ENCODE measurements at regions of chr12 and their contacts with region 1.

Region 1: DNA sequence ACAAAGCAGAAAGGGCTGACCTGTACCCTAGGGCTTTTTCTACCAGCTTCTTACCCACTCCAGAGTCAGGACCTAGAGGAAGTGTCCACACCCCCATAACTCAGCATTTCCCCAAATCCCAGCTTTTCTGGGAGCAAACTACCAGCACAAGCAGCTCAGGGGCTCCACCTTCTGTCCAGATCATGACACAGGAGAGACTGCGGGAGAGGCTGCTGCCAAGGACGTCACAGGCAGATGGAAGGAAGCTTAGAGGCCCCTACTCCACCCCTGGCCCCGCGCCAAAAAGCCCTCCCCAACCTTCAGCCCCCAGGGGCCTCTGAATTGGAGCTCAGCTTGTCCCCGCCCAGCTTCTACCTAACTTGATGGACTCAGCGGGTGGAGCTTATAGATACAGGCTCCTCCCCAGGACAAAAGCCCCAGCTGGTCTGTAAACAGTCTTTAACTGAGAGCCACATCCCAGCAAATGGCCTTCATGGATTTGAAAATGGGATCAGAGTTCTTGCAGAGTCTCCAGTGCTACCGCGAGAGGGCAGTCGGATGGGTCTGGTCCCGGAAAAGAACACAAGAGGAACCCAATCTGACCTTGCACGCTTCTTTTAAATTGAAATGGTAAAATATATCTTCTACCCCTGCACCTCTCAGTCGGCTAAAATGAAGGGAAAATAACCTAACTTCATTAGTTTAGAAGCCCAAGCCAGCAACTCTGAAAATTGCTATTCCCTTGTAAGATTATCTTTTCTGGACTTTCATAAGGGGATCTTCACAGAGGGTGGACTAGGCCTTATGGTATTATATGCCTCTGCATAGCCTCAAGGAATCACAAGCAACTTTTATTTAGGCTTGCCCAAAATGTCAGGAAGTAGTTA is 6.8 kb upstream of the BAZ2A start:
- DNase-seq: peak; percentile 92
- H3K4me3 ChIP-seq: peak overlapping the region; percentile 90 to 95
- H3K27ac ChIP-seq: peak overlapping the region; percentile 94 to 96
- H3K4me1 ChIP-seq: peaks cover 25 to 44% of the 10 kb centered on the region in 2 experiments
- H3K27me3 ChIP-seq: no peaks in the 10 kb centered on the region
- CTCF ChIP-seq: peak; percentile 75
- EP300 ChIP-seq: 0 out of 4 replicates have a peak, but pooled peaks have one; percentile 19 to 20
- RAD21 ChIP-seq: peak; percentile 80

Region 2: DNA sequence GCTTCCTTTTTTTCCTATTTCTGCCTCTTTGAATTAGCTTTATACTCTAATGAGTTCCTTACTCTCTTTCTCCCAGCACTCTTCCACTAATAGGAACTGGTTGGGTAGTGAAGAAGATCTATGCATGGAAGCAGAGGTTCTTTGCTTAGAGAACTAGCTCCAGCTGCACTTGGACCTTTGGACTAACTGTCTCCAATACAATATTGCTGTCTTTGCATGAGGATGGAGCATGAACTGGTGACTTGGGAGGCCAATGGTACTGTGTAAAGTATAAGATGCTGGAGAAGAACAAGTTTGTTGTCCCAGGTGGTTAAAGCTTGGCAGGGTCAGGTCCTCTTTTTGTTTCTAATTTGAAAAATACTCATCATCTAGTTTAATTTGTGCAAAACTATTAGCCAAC is 146.5 kb before region 1 on chr12:
- CTCF ChIA-PET with region 1: interaction called, 10 read pairs
- POLR2A ChIA-PET with region 1: no interaction called
- DNase-seq: no peak
- H3K4me3 ChIP-seq: no peak overlapping the region
- H3K27ac ChIP-seq: no peak overlapping the region
- H3K4me1 ChIP-seq: peaks cover 0 to 10% of the 10 kb centered on the region in 2 experiments; a peak in 1 of 4 replicates
- H3K27me3 ChIP-seq: peaks cover 16% of the 10 kb centered on the region; the same call in 1 of the 2 replicates
- CTCF ChIP-seq: no peak
- EP300 ChIP-seq: no peak
- RAD21 ChIP-seq: no peak

Region 3: DNA sequence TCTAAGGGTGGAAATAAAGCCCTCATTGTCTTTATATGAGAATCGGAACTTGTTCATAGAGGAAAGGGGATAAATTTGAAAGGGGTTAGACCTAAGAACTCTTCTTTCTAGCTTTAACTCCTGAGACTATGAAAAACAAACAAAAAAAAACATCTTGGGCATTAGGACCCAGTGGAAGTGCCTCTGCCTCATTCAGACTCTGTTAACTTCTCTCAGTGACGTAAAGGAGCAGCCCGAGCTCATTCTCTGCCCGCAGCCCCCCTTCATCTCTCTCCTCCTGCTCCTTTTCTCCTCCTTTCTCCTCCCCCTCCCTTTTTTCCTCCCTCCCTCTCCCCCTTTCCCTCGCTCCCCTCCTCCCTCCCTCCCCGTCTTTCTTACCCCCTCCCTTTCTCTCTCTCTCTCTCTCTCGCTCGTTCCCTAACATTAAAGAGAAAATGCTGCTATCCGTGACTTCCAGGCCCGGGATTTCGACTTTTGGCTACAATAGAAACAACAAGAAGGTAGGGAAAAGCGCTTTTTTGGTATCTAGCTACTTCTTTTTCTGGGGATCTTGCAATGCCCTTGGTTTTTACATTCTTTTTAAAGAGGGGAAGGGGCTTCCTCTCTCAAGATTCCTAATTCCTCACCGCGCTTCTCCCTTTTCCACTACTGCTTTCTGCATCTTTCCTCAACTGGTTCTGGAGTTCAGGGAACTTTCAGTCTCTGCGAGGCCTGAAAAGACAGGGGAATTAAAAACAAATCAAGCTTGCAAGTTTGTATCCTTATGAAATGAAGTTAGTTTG is 115.1 kb before region 1 on chr12 and contains the start of gene RBMS2:
- CTCF ChIA-PET with region 1: interaction called, 18 read pairs
- POLR2A ChIA-PET with region 1: interaction called, 5 read pairs
- DNase-seq: peak; percentile 75
- H3K4me3 ChIP-seq: peak within 1 kb of the TSS; percentile 62 to 73
- H3K27ac ChIP-seq: peak within 1 kb of the TSS; percentile 83 to 93
- H3K4me1 ChIP-seq: peaks cover 0 to under 1% of the 10 kb centered on the region in 2 experiments; a peak in 1 of 4 replicates
- H3K27me3 ChIP-seq: no peaks in the 10 kb centered on the region
- CTCF ChIP-seq: no peak
- EP300 ChIP-seq: no peak
- RAD21 ChIP-seq: no peak
- polyA plus RNA-seq, gene RBMS2: 8.9 and 12.2 TPM in 2 replicates

Region 4: GRCh38 chr12:56601503-56601902 is 35.4 kb before region 1 on chr12:
- CTCF ChIA-PET with region 1: interaction called, 40 read pairs
- POLR2A ChIA-PET with region 1: interaction called, 3 read pairs
- DNase-seq: peak; percentile 43
- H3K4me3 ChIP-seq: no peak overlapping the region
- H3K27ac ChIP-seq: no peak overlapping the region
- H3K4me1 ChIP-seq: no peaks in the 10 kb centered on the region
- H3K27me3 ChIP-seq: no peaks in the 10 kb centered on the region
- CTCF ChIP-seq: peak; percentile 32
- EP300 ChIP-seq: no peak
- RAD21 ChIP-seq: peak; percentile 32; the same call in 1 of the 2 replicates

Region 5: GRCh38 chr12:56622535-56622934 is 14.4 kb before region 1 on chr12:
- CTCF ChIA-PET with region 1: interaction called, 35 read pairs
- POLR2A ChIA-PET with region 1: interaction called, 3 read pairs
- DNase-seq: no peak
- H3K4me3 ChIP-seq: no peak overlapping the region
- H3K27ac ChIP-seq: no peak overlapping the region
- H3K4me1 ChIP-seq: no peaks in the 10 kb centered on the region
- H3K27me3 ChIP-seq: no peaks in the 10 kb centered on the region
- CTCF ChIP-seq: no peak
- EP300 ChIP-seq: no peak
- RAD21 ChIP-seq: no peak

Measured in SK-N-SH (cell line).